ENCODE measurements at regions of chr3 and their contacts with region 1.

Region 1: GRCh38 chr3:58630076-58630709 is 36.4 kb downstream of the FAM3D start:
- DNase-seq: peak in 4 of 5 donors; percentile 29 to 46 (median 36)
- H3K4me3 ChIP-seq: no peak overlapping the region
- H3K4me3 Mint-ChIP-seq: no peak overlapping the region
- H3K27ac ChIP-seq: no peak overlapping the region
- H3K27ac Mint-ChIP-seq: no peak overlapping the region
- H3K4me1 ChIP-seq: no peaks in the 10 kb centered on the region
- H3K4me1 Mint-ChIP-seq: peaks cover 0 to 2% (median under 1%) of the 10 kb centered on the region in 4 donors
- H3K27me3 ChIP-seq: no peaks in the 10 kb centered on the region
- H3K27me3 Mint-ChIP-seq: peaks cover 0 to 8% of the 10 kb centered on the region in 2 donors

Region 2: GRCh38 chr3:58188173-58188564 is 442.0 kb before region 1 on chr3:
- CTCF ChIA-PET with region 1: interaction called, 5 read pairs
- POLR2A ChIA-PET with region 1: no interaction called
- intact Hi-C with region 1: loop called (anchors 5 kb)
- DNase-seq: no peak
- H3K4me3 ChIP-seq: no peak overlapping the region
- H3K4me3 Mint-ChIP-seq: no peak overlapping the region
- H3K27ac ChIP-seq: no peak overlapping the region
- H3K27ac Mint-ChIP-seq: no peak overlapping the region
- H3K4me1 ChIP-seq: no peaks in the 10 kb centered on the region
- H3K4me1 Mint-ChIP-seq: peaks cover 0 to 4% (median 3%) of the 10 kb centered on the region in 4 donors
- H3K27me3 ChIP-seq: no peaks in the 10 kb centered on the region
- H3K27me3 Mint-ChIP-seq: no peaks in the 10 kb centered on the region

Region 3: DNA sequence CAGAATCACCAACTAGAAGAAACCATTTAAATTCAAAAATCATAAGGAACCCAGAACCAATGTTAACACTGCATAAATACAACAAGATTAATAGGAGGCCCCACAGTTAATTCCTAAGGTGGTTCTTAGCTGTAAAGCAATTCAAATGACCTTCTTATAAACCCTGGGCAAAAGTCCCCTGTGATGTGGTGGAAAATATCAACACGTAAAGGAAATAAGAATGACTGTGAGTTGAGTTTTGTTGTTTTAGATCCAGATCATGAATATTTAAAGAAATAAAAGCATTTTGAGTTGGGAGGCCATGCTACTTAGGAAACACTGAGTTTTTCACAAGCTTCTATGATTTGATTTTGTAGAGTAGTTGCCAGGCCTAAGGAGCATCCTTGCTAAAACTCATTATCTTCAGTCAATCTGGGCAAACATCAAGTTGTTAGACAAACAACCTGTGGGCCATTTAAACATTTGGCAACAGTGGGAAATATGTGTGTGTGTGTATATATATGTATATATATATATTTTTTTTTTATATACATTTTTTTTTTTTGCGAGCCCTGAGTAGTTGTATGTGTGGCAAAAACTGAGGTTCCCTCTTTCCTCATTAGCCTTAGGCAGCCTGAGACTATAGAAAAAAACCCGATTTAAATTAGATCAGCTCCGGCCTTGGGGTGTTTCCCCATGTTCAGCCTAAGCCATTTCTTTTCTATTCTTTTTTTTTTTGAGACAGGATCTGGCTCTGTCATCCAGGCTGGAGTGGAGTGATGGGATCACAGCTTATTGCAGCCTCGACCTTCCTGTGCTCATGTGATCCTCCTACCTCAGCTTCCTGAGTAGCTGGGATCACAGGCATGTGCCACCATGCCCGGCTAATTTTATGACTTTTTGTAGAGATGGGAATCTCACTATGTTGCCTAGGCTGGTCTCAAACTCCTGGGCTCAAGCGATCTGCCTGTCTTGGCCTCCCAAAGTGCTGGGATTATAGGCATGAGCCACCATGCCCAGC is 305.5 kb before region 1 on chr3:
- CTCF ChIA-PET with region 1: interaction called, 3 read pairs
- POLR2A ChIA-PET with region 1: no interaction called
- intact Hi-C with region 1: loop called (anchors 2 kb)
- DNase-seq: peak; percentile 15 to 51 (median 39)
- H3K4me3 ChIP-seq: no peak overlapping the region
- H3K4me3 Mint-ChIP-seq: peak overlapping the region in 1 of 8 donors; percentile 7
- H3K27ac ChIP-seq: no peak overlapping the region
- H3K27ac Mint-ChIP-seq: peak overlapping the region; percentile 76 to 87 (median 79)
- H3K4me1 ChIP-seq: peaks cover 18% of the 10 kb centered on the region
- H3K4me1 Mint-ChIP-seq: peaks cover 7 to 25% (median 17%) of the 10 kb centered on the region in 4 donors
- H3K27me3 ChIP-seq: no peaks in the 10 kb centered on the region
- H3K27me3 Mint-ChIP-seq: no peaks in the 10 kb centered on the region

Region 4: DNA sequence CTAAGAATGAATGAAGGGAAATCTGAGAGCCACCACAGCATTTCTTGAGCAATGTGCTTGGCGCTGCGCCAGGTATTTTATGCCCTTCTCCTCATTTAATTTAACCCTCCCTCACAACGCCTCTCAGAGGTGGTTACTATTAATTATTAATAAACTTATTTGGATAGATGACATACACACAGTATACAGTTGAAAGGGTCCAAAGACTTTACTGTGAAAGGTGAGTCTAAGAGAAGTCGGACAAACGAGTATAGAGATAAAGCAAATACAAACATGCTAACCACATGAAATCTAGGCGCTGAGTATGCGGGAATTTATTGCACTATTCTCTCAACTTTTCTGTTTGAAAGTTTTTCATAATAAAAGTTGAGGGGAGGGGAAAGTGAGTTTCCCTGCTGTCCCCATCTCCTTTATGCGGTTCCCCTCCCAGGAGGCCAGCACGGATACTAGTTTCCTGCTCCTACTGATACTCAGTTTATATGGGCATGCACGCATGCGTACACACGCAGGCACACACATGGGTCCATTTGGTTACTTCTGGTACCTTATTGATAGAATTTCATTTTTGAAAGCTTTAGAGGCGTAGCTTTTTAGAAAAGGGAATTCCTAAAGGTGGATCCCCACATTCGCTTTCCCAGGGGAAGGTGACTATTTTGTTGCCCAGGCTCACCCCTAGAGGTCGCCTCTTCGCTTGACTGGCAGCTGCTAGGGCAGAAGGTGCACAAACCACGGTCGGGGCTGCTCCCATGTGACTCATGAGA is 166.8 kb before region 1 on chr3:
- CTCF ChIA-PET with region 1: interaction called, 7 read pairs
- POLR2A ChIA-PET with region 1: no interaction called
- intact Hi-C with region 1: loop called (anchors 10 kb)
- DNase-seq: peak; percentile 41 to 67 (median 54)
- H3K4me3 ChIP-seq: no peak overlapping the region
- H3K4me3 Mint-ChIP-seq: peak overlapping the region in 6 of 8 donors; percentile 8 to 56 (median 25)
- H3K27ac ChIP-seq: no peak overlapping the region
- H3K27ac Mint-ChIP-seq: peak overlapping the region in 2 of 7 donors; percentile 41 to 79
- H3K4me1 ChIP-seq: peaks cover 7% of the 10 kb centered on the region
- H3K4me1 Mint-ChIP-seq: peaks cover 2 to 7% (median 7%) of the 10 kb centered on the region in 4 donors
- H3K27me3 ChIP-seq: no peaks in the 10 kb centered on the region
- H3K27me3 Mint-ChIP-seq: peaks cover 0 to 3% of the 10 kb centered on the region in 2 donors

Region 5: GRCh38 chr3:58568572-58569286 is 61.5 kb before region 1 on chr3:
- CTCF ChIA-PET with region 1: interaction called, 94 read pairs
- POLR2A ChIA-PET with region 1: interaction called, 3 read pairs
- intact Hi-C with region 1: loop called (anchors 1 kb)
- DNase-seq: peak in 4 of 5 donors; percentile 37 to 50 (median 41)
- H3K4me3 ChIP-seq: no peak overlapping the region
- H3K4me3 Mint-ChIP-seq: peak overlapping the region; percentile 2 to 72 (median 54)
- H3K27ac ChIP-seq: no peak overlapping the region
- H3K27ac Mint-ChIP-seq: peak overlapping the region in 2 of 7 donors; percentile 79 to 81
- H3K4me1 ChIP-seq: peaks cover 7% of the 10 kb centered on the region
- H3K4me1 Mint-ChIP-seq: peaks cover 4 to 7% (median 6%) of the 10 kb centered on the region in 4 donors
- H3K27me3 ChIP-seq: no peaks in the 10 kb centered on the region
- H3K27me3 Mint-ChIP-seq: peaks cover 2 to 7% of the 10 kb centered on the region in 2 donors

Region 6: DNA sequence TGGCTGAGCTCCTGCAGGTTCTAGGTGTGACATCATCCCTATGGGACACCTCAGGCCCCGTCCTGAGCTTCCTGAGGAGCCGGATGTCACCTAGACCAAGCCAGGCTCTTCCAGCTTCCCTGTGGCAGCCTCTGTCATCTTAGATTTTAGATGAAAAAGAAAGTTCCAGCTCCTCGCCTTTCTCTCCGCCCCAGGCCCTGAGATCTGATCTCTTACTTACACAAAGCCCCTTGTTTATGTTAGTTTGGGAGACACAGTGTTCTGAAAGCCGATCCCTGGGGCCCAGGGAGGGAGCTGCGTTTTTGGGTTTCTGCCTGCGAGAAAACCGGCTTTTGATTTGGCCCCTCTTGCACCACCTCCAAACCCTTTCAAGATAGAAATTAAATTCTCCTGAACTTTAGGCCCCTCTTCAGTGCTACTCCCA is 12.8 kb before region 1 on chr3:
- CTCF ChIA-PET with region 1: interaction called, 11 read pairs
- POLR2A ChIA-PET with region 1: no interaction called
- intact Hi-C with region 1: no loop called
- DNase-seq: no peak
- H3K4me3 ChIP-seq: no peak overlapping the region
- H3K4me3 Mint-ChIP-seq: no peak overlapping the region
- H3K27ac ChIP-seq: no peak overlapping the region
- H3K27ac Mint-ChIP-seq: no peak overlapping the region
- H3K4me1 ChIP-seq: no peaks in the 10 kb centered on the region
- H3K4me1 Mint-ChIP-seq: no peaks in the 10 kb centered on the region
- H3K27me3 ChIP-seq: no peaks in the 10 kb centered on the region
- H3K27me3 Mint-ChIP-seq: no peaks in the 10 kb centered on the region

Region 7: DNA sequence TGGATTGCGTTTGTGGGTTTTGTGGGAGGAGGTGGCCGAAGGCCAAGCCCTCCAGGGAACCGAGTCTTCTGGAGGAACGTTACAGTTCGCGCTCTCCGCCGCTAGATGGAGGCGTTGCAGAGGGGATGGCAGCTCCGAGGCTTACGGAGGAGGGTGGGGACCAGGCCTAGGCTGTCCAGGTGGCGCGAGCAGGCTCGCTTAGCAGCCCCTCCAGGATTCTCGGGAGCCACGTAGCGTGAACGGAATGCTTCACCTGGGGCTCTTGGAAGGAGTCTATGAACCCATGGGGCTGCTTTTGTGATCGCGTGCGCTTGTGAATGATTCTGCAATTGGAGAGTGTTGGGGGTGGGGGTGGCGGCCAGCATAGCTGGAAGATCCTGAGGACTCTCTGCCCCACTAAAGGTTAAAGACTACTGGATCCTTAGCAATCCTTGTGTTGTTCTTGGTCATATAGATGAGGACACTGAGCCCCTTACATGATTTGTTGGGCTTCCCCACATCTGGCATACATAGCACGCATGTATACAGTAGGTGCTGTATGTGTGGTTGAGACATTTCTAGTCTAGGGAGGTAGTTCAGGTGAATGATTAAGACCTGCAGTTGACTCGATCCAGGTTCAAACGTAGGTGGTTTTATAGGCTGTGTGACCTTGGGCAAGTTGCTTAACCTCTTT is 10.6 kb after region 1 on chr3:
- CTCF ChIA-PET with region 1: interaction called, 60 read pairs
- POLR2A ChIA-PET with region 1: no interaction called
- intact Hi-C with region 1: no loop called
- DNase-seq: peak in 3 of 5 donors; percentile 21 to 33 (median 26)
- H3K4me3 ChIP-seq: no peak overlapping the region
- H3K4me3 Mint-ChIP-seq: peak overlapping the region in 1 of 8 donors; percentile 23
- H3K27ac ChIP-seq: no peak overlapping the region
- H3K27ac Mint-ChIP-seq: peak overlapping the region in 1 of 7 donors; percentile 13
- H3K4me1 ChIP-seq: no peaks in the 10 kb centered on the region
- H3K4me1 Mint-ChIP-seq: peaks cover 0 to 6% (median 0%) of the 10 kb centered on the region in 4 donors
- H3K27me3 ChIP-seq: no peaks in the 10 kb centered on the region
- H3K27me3 Mint-ChIP-seq: peaks cover 3 to 8% of the 10 kb centered on the region in 2 donors

Region 8: GRCh38 chr3:59759298-59760031 is 1129.3 kb after region 1 on chr3:
- CTCF ChIA-PET with region 1: no interaction called
- POLR2A ChIA-PET with region 1: no interaction called
- intact Hi-C with region 1: no loop called
- DNase-seq: no peak
- H3K4me3 ChIP-seq: no peak overlapping the region
- H3K4me3 Mint-ChIP-seq: peak overlapping the region in 1 of 8 donors; percentile 2
- H3K27ac ChIP-seq: no peak overlapping the region
- H3K27ac Mint-ChIP-seq: peak overlapping the region in 2 of 7 donors; percentile 24 to 38
- H3K4me1 ChIP-seq: peaks cover 1% of the 10 kb centered on the region
- H3K4me1 Mint-ChIP-seq: peaks cover 18 to 60% (median 36%) of the 10 kb centered on the region in 4 donors
- H3K27me3 ChIP-seq: no peaks in the 10 kb centered on the region
- H3K27me3 Mint-ChIP-seq: no peaks in the 10 kb centered on the region

Measured in CD4-positive, alpha-beta memory T cell (primary cell).